Endothelial cell of umbilical vein (primary cell): ENCODE measurements at regions of chr5 and their contacts with region 1.

Region 1: GRCh38 chr5:73638344-73639095 is 12.5 kb downstream of the ARHGEF28 start:
- DNase-seq: peak; percentile 95
- H3K4me3 ChIP-seq: peak overlapping the region in 1 of 3 experiments; percentile 27
- H3K27ac ChIP-seq: peak overlapping the region; percentile 97
- H3K4me1 ChIP-seq: peaks cover 77% of the 10 kb centered on the region
- H3K27me3 ChIP-seq: no peaks in the 10 kb centered on the region
- CTCF ChIP-seq: no peak
- POLR2A ChIP-seq: peak; percentile 75

Region 2: GRCh38 chr5:73605227-73606020 is 33.1 kb before region 1 on chr5:
- CTCF ChIA-PET with region 1: interaction called, 3 read pairs
- POLR2A ChIA-PET with region 1: no interaction called
- dilution Hi-C with region 1: no loop called
- intact Hi-C with region 1: loop called (anchors 1 kb)
- DNase-seq: peak; percentile 89
- H3K4me3 ChIP-seq: no peak overlapping the region
- H3K27ac ChIP-seq: peak overlapping the region; percentile 84
- H3K4me1 ChIP-seq: peaks cover 46% of the 10 kb centered on the region
- H3K27me3 ChIP-seq: no peaks in the 10 kb centered on the region
- CTCF ChIP-seq: no peak
- POLR2A ChIP-seq: peak; percentile 58

Region 3: GRCh38 chr5:73615947-73616346 is 22.6 kb before region 1 on chr5:
- CTCF ChIA-PET with region 1: no interaction called
- POLR2A ChIA-PET with region 1: no interaction called
- dilution Hi-C with region 1: no loop called
- intact Hi-C with region 1: no loop called
- DNase-seq: no peak
- H3K4me3 ChIP-seq: no peak overlapping the region
- H3K27ac ChIP-seq: no peak overlapping the region
- H3K4me1 ChIP-seq: peaks cover 14% of the 10 kb centered on the region
- H3K27me3 ChIP-seq: no peaks in the 10 kb centered on the region
- CTCF ChIP-seq: no peak
- POLR2A ChIP-seq: no peak

Region 4: DNA sequence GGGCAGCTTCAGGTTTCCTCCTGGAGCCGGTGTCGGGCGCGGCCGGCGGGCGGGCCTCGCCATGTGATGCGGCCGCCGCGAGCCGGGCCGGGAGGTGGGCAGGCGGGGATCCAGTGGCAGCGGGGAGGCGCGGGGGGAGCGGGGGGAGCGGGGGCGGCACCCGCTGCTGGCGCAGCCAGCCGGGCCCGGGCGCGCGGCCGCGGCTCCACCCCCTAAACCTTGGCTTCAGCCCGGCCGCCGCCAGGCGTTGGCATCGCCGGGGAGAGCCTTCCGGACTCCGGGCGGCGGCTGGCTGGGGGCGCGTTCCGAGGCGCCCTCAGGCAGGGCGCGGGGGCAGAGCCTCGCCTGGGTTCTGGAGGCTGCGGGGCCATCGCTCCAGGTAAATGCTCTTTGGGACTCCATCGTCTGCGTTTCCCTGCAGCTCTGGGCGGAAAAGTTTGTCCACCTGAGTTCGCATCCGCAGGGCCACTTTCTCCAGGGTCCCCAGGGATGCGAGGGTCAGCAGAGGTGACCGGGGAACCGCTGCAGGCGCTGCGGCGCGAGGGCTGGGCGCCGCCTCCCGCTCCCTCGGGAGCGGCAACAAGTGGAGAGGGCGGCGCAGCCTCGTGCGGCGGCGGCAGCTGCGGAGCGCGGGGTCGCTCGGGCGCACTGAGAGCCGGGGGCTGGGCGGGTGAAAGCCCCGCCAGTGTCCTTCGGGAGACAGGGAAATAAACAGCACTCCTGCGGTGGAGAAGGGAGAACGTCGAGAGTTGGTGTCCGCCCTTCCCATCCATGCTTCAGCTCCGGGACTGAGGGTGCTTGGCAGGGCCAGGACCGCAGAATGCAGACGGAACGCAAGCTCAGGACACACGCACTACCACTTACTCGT is 12.3 kb before region 1 on chr5 and contains the start of gene ARHGEF28:
- CTCF ChIA-PET with region 1: interaction called, 3 read pairs
- POLR2A ChIA-PET with region 1: interaction called, 6 read pairs
- dilution Hi-C with region 1: no loop called
- intact Hi-C with region 1: loop called (anchors 1 kb)
- DNase-seq: peak; percentile 47
- H3K4me3 ChIP-seq: peak within 1 kb of the TSS; percentile 48 to 83 (median 74)
- H3K27ac ChIP-seq: peak within 1 kb of the TSS; percentile 81
- H3K4me1 ChIP-seq: peaks cover 40% of the 10 kb centered on the region
- H3K27me3 ChIP-seq: no peaks in the 10 kb centered on the region
- CTCF ChIP-seq: no peak
- POLR2A ChIP-seq: peak; percentile 92
- total RNA-seq, gene ARHGEF28: 108 and 116 TPM in 2 replicates

Region 5: DNA sequence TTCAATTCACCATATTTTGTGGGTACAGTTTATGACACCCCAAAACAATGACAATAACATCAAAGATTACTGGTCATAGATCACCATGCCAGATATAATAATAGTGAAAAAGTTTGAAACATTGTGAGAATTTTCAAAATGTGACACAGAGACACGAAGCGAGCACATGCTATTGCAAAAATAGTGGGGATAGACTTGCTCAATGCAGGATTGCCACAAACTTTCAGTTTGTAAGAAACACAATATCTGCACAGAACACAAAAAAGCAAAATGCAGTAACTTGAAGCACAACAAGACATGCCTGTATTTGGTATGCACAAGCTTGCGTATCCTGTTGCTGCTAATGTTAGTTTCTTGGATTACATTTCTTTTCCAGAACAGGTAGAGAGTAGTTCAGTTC is 23.2 kb after region 1 on chr5:
- CTCF ChIA-PET with region 1: no interaction called
- POLR2A ChIA-PET with region 1: no interaction called
- dilution Hi-C with region 1: no loop called
- intact Hi-C with region 1: no loop called
- DNase-seq: no peak
- H3K4me3 ChIP-seq: no peak overlapping the region
- H3K27ac ChIP-seq: no peak overlapping the region
- H3K4me1 ChIP-seq: no peaks in the 10 kb centered on the region
- H3K27me3 ChIP-seq: no peaks in the 10 kb centered on the region
- CTCF ChIP-seq: no peak
- POLR2A ChIP-seq: no peak

Region 6: GRCh38 chr5:73673161-73673591 is 34.7 kb after region 1 on chr5:
- CTCF ChIA-PET with region 1: interaction called, 29 read pairs
- POLR2A ChIA-PET with region 1: interaction called, 10 read pairs
- dilution Hi-C with region 1: no loop called
- intact Hi-C with region 1: loop called (anchors 1 kb)
- DNase-seq: peak; percentile 91
- H3K4me3 ChIP-seq: no peak overlapping the region
- H3K27ac ChIP-seq: peak overlapping the region; percentile 74
- H3K4me1 ChIP-seq: peaks cover 33% of the 10 kb centered on the region
- H3K27me3 ChIP-seq: no peaks in the 10 kb centered on the region
- CTCF ChIP-seq: peak in 1 of 2 donors; percentile 6
- POLR2A ChIP-seq: no peak